ENCODE measurements at regions of chr14 and their contacts with region 1.

Region 1: GRCh38 chr14:55579724-55580469 is at the start of gene KTN1:
- DNase-seq: peak; percentile 84
- ATAC-seq: peak; percentile 86
- H3K4me3 Mint-ChIP-seq: peak within 1 kb of the TSS; percentile 96
- H3K27ac Mint-ChIP-seq: peak within 1 kb of the TSS; percentile 91
- H3K4me1 Mint-ChIP-seq: peaks cover 33% of the 10 kb centered on the region
- H3K27me3 Mint-ChIP-seq: no peaks in the 10 kb centered on the region
- CTCF ChIP-seq: no peak
- total RNA-seq, gene KTN1: 108 and 116 TPM in 2 replicates

Region 2: DNA sequence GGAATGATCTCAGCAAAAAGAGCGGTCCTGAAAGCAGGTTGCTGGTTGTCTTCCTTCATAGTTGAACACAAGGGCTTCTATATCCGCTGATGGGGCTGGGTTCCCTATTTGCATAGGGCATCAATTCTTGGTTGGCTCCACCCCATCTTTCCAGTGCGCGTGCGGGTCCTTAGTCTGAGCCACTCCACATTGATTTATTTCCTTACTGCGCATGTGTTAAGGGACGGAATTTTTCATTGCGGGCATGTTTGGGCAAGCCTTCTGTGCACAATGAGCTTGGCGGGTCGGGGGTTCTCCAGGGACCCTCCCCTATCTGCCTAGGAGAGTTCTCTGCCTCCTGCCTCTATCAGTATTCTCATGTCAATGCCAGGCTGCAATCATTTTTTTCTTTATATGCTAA is 367.3 kb before region 1 on chr14:
- CTCF ChIA-PET with region 1: no interaction called
- POLR2A ChIA-PET with region 1: no interaction called
- intact Hi-C with region 1: loop called (anchors 10 kb)
- DNase-seq: no peak
- ATAC-seq: no peak
- H3K4me3 Mint-ChIP-seq: no peak overlapping the region
- H3K27ac Mint-ChIP-seq: no peak overlapping the region
- H3K4me1 Mint-ChIP-seq: peaks cover 2% of the 10 kb centered on the region
- H3K27me3 Mint-ChIP-seq: no peaks in the 10 kb centered on the region
- CTCF ChIP-seq: no peak

Region 3: GRCh38 chr14:55411426-55412389 is 168.2 kb before region 1 on chr14 and contains the start of gene ATG14:
- CTCF ChIA-PET with region 1: no interaction called
- POLR2A ChIA-PET with region 1: no interaction called
- intact Hi-C with region 1: loop called (anchors 1 kb)
- DNase-seq: peak; percentile 73
- ATAC-seq: peak; percentile 99
- H3K4me3 Mint-ChIP-seq: peak within 1 kb of the TSS; percentile 93
- H3K27ac Mint-ChIP-seq: peak within 1 kb of the TSS; percentile 76
- H3K4me1 Mint-ChIP-seq: peaks cover 32% of the 10 kb centered on the region
- H3K27me3 Mint-ChIP-seq: peaks cover 12% of the 10 kb centered on the region
- CTCF ChIP-seq: no peak
- total RNA-seq, gene ATG14: 9.7 and 12.1 TPM in 2 replicates

Region 4: GRCh38 chr14:55610713-55611370 is 30.9 kb after region 1 on chr14:
- CTCF ChIA-PET with region 1: no interaction called
- POLR2A ChIA-PET with region 1: no interaction called
- intact Hi-C with region 1: loop called (anchors 5 kb)
- DNase-seq: no peak
- ATAC-seq: no peak
- H3K4me3 Mint-ChIP-seq: no peak overlapping the region
- H3K27ac Mint-ChIP-seq: no peak overlapping the region
- H3K4me1 Mint-ChIP-seq: peaks cover 33% of the 10 kb centered on the region
- H3K27me3 Mint-ChIP-seq: no peaks in the 10 kb centered on the region
- CTCF ChIP-seq: no peak

Region 5: GRCh38 chr14:56117765-56118610 is 538.1 kb after region 1 on chr14 and contains the start of gene PELI2:
- CTCF ChIA-PET with region 1: no interaction called
- POLR2A ChIA-PET with region 1: interaction called, 7 read pairs
- intact Hi-C with region 1: loop called (anchors 1 kb)
- DNase-seq: peak; percentile 83
- ATAC-seq: peak; percentile 83
- H3K4me3 Mint-ChIP-seq: peak within 1 kb of the TSS; percentile 95
- H3K27ac Mint-ChIP-seq: peak within 1 kb of the TSS; percentile 93
- H3K4me1 Mint-ChIP-seq: peaks cover 54% of the 10 kb centered on the region
- H3K27me3 Mint-ChIP-seq: peaks cover 2% of the 10 kb centered on the region
- CTCF ChIP-seq: no peak
- total RNA-seq, gene PELI2: 5.5 and 6.1 TPM in 2 replicates

Region 6: DNA sequence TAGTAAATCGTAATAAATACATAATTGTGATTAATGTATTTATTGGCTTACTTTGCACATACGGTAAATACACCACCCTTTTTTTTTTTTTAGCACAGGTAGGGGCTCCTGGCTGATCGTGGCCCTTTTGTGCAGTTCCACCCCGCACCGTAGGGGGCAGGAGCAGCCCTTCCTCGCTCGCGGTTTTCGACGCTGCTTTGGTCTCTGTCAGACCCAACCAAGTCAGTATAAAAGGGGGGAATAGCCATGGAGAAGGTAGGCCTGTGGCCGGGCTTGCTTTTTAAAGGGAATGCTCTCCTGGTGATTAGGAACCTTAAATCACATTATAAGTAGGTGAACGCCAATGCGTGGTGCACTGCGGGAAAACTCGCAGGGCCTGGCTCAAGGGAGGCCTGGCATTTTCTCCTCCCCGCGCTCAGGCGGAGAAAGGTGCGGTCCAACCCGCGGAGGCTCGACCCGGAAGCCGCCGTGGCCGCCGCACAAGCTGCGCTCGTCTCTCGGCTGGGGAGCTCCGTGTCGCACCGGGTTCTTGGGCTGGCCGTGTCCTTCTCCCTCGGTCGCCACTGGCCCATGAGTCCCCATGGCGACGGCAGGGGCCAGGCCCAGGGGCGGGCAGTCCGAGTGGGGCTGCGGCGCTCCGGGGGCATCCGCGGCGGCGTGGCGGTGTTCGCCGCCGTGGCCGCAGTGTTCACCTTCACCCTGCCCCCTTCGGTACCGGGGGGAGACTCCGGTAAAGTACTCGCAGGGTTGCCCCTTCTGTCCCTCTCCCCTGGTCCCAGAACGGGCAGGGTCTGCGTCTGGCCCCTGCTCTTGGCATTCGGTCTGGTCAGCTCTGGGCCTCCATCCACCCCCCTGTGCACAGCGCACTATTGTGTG is 999.7 kb after region 1 on chr14 and contains the start of gene TMEM260:
- CTCF ChIA-PET with region 1: no interaction called
- POLR2A ChIA-PET with region 1: interaction called, 4 read pairs
- intact Hi-C with region 1: loop called (anchors 5 kb)
- DNase-seq: peak; percentile 87
- ATAC-seq: peak; percentile 94
- H3K4me3 Mint-ChIP-seq: peak within 1 kb of the TSS; percentile 90
- H3K27ac Mint-ChIP-seq: peak within 1 kb of the TSS; percentile 96
- H3K4me1 Mint-ChIP-seq: peaks cover 35% of the 10 kb centered on the region
- H3K27me3 Mint-ChIP-seq: no peaks in the 10 kb centered on the region
- CTCF ChIP-seq: peak; percentile 78
- total RNA-seq, gene TMEM260: 22.0 and 24.7 TPM in 2 replicates

Region 7: DNA sequence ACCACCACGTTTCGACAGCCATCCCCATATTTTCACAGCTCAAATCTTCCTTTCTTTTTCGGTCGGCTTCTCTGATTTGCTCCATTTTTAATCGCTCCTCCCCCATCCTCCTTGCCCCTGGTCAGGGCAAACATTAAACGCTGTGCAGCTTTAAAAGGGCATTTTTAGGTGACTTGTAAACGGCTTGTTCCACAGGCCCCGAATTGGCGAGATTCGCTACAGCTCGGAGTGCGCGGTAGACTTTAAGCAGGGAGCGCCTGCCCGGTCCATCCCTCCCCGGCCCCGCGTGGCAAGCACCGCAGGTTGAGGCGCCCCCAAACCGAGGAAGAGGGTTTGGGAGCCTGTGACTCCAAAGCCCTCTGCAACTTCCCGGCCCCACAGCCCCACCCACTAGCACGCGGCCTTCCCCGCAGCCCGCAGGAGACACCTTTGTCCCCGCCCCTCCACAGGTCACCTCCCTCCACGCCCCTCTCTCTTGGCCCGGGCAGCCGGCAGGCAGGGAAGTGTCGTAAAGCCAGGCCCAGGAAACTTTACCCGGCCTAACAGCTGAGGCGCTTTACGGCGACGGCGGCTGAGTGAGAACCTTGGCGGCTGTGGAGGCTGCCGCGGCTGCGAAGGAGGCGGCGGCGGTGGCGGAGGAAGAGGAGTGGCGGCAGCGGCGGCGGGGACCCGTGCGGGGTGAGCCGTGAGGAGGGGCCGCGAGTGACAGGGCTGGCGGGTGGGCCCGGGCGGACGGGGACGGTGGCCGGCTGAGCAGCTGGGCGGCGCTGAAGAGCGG is 1810.3 kb after region 1 on chr14 and contains the start of gene NAA30:
- CTCF ChIA-PET with region 1: no interaction called
- POLR2A ChIA-PET with region 1: no interaction called
- intact Hi-C with region 1: loop called (anchors 5 kb)
- DNase-seq: peak; percentile 89
- ATAC-seq: peak; percentile 96
- H3K4me3 Mint-ChIP-seq: peak within 1 kb of the TSS; percentile 88
- H3K27ac Mint-ChIP-seq: peak within 1 kb of the TSS; percentile 89
- H3K4me1 Mint-ChIP-seq: peaks cover 40% of the 10 kb centered on the region
- H3K27me3 Mint-ChIP-seq: peaks cover 1% of the 10 kb centered on the region
- CTCF ChIP-seq: no peak
- total RNA-seq, gene NAA30: 12.8 and 14.6 TPM in 2 replicates